BJ (cell line): ENCODE measurements at regions of chr16 and their contacts with region 1.

Region 1: DNA sequence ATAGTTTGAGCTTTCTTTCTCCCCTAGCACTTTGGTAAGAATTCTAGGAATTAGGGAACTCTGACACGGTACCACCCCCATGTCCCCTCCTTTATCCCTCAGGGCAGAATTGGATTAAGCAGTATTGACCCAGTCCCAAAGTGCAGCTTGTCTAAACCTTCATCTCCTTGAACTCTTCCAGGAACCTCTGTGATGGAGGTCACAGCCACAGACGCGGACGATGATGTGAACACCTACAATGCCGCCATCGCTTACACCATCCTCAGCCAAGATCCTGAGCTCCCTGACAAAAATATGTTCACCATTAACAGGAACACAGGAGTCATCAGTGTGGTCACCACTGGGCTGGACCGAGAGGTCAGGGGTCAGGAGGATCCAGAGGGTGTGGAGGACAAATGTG is 31.8 kb upstream of the TANGO6 start:
- DNase-seq: no peak
- H3K4me3 ChIP-seq: no peak overlapping the region
- H3K27me3 ChIP-seq: no peaks in the 10 kb centered on the region
- CTCF ChIP-seq: no peak

Region 2: GRCh38 chr16:68790130-68790761 is 21.3 kb before region 1 on chr16:
- CTCF ChIA-PET with region 1: no interaction called
- POLR2A ChIA-PET with region 1: interaction called, 12 read pairs
- DNase-seq: peak; percentile 26
- H3K4me3 ChIP-seq: no peak overlapping the region
- H3K27me3 ChIP-seq: no peaks in the 10 kb centered on the region; the same call in 1 of the 2 replicates
- CTCF ChIP-seq: no peak

Region 3: DNA sequence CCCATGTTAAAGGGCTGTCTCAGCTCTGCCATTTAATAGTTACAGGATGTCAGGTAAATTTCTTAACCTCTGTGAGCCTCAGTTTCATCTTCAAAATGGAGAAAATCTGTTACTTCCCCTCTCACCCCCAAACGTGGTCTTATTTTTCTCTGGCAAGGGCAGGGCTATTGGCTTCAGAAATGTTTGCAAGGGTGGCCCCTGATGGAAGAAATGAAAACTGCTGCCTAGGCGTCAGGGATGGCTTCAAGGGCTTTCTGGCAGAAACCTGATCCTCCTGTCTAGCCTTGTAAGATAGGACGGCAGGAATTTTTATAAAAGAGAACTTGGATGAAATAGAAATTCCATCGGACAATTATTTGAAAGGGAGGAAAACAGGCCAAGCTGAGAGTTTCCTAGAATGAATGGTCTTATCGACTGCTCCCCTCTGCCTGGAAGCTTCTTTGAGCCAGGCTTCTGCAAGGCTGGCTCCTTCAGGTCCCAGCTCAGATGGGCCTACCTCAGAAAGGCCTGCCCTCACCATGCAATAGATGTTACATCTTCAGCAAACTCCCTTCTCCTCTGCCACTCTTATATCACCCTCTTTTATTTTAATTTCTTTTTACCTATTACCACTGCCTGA is 11.1 kb before region 1 on chr16:
- CTCF ChIA-PET with region 1: interaction called, 11 read pairs
- POLR2A ChIA-PET with region 1: no interaction called
- DNase-seq: peak; percentile 76
- H3K4me3 ChIP-seq: no peak overlapping the region
- H3K27me3 ChIP-seq: 0 out of 2 replicates have a peak, but pooled peaks cover 1% of the 10 kb centered on the region
- CTCF ChIP-seq: peak; percentile 89